ENCODE measurements at regions of chr17 and their contacts with region 1.

Region 1: DNA sequence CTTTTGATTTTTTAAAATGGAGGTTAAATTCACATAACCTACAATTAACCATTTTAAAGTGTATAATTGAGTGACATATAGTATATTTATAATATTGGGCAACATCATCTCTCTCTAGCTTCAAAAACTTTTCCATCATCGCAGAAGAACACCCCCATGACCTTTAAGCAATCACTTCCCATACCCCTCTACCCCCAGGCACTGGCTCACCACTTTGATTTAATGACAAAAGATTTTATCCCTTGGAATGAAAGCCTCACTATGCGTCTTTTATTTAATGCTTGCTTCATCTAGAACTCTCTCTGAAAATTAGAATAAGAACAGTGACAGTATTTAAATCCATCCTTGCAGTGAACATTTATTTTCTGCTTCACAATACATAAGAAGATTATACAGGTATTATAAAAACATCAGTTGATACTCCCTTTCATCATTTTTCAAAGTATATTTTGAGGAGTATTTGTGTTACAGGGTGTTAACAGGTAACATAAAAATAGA is 3.2 kb upstream of the KRTAP1-3 start:
- DNase-seq: no peak
- ATAC-seq: no peak
- H3K4me3 Mint-ChIP-seq: no peak overlapping the region
- H3K27ac Mint-ChIP-seq: no peak overlapping the region
- H3K4me1 Mint-ChIP-seq: no peaks in the 10 kb centered on the region
- H3K27me3 Mint-ChIP-seq: peaks cover 17% of the 10 kb centered on the region
- CTCF ChIP-seq: no peak

Region 2: GRCh38 chr17:40542558-40543411 is 495.1 kb before region 1 on chr17:
- CTCF ChIA-PET with region 1: no interaction called
- POLR2A ChIA-PET with region 1: interaction called, 21 read pairs
- intact Hi-C with region 1: no loop called
- DNase-seq: peak; percentile 40
- ATAC-seq: peak; percentile 63
- H3K4me3 Mint-ChIP-seq: peak overlapping the region; percentile 68
- H3K27ac Mint-ChIP-seq: peak overlapping the region; percentile 93
- H3K4me1 Mint-ChIP-seq: peaks cover 77% of the 10 kb centered on the region
- H3K27me3 Mint-ChIP-seq: no peaks in the 10 kb centered on the region
- CTCF ChIP-seq: no peak

Region 3: GRCh38 chr17:41002814-41003213 is 35.1 kb before region 1 on chr17:
- CTCF ChIA-PET with region 1: no interaction called
- POLR2A ChIA-PET with region 1: no interaction called
- intact Hi-C with region 1: no loop called
- DNase-seq: no peak
- ATAC-seq: no peak
- H3K4me3 Mint-ChIP-seq: no peak overlapping the region
- H3K27ac Mint-ChIP-seq: no peak overlapping the region
- H3K4me1 Mint-ChIP-seq: no peaks in the 10 kb centered on the region
- H3K27me3 Mint-ChIP-seq: peaks cover 25% of the 10 kb centered on the region
- CTCF ChIP-seq: no peak

Region 4: GRCh38 chr17:41024697-41025096 is 13.2 kb before region 1 on chr17:
- CTCF ChIA-PET with region 1: no interaction called
- POLR2A ChIA-PET with region 1: no interaction called
- intact Hi-C with region 1: no loop called
- DNase-seq: no peak
- ATAC-seq: no peak
- H3K4me3 Mint-ChIP-seq: no peak overlapping the region
- H3K27ac Mint-ChIP-seq: no peak overlapping the region
- H3K4me1 Mint-ChIP-seq: no peaks in the 10 kb centered on the region
- H3K27me3 Mint-ChIP-seq: peaks cover 27% of the 10 kb centered on the region
- CTCF ChIP-seq: no peak